BJ (cell line): ENCODE measurements at regions of chr7 and their contacts with region 1.

Region 1: DNA sequence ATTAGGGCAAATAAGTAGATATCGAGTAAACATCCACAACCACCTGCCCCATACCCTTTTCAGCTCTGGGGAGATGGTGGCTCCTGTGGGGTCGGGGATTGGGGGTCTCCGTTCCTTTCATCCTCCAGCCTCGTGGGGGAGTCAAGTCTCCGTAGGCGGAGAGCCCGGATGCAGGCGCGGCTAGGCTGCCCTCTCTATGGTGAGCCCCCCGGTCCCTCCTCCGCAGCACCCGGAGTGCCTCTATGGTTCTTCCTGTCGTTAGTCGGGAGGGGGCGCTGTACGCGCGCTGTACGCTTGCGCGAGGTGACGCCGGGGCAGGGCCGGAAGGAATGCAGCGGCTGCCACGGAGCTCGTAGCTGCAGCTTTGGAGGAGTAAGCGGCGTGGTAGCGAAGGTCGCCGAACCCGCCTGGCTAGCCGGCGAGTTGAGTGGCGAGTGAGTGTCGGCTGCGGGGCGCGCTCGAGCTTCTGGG is 14.8 kb upstream of the MMD2 start:
- DNase-seq: peak; percentile 46
- H3K4me3 ChIP-seq: peak overlapping the region; percentile 89
- H3K27me3 ChIP-seq: no peaks in the 10 kb centered on the region
- CTCF ChIP-seq: peak; percentile 92

Region 2: GRCh38 chr7:4957847-4958476 is 15.8 kb before region 1 on chr7:
- CTCF ChIA-PET with region 1: interaction called, 19 read pairs
- POLR2A ChIA-PET with region 1: no interaction called
- DNase-seq: no peak
- H3K4me3 ChIP-seq: no peak overlapping the region
- H3K27me3 ChIP-seq: peaks cover 7% of the 10 kb centered on the region
- CTCF ChIP-seq: no peak

Region 3: DNA sequence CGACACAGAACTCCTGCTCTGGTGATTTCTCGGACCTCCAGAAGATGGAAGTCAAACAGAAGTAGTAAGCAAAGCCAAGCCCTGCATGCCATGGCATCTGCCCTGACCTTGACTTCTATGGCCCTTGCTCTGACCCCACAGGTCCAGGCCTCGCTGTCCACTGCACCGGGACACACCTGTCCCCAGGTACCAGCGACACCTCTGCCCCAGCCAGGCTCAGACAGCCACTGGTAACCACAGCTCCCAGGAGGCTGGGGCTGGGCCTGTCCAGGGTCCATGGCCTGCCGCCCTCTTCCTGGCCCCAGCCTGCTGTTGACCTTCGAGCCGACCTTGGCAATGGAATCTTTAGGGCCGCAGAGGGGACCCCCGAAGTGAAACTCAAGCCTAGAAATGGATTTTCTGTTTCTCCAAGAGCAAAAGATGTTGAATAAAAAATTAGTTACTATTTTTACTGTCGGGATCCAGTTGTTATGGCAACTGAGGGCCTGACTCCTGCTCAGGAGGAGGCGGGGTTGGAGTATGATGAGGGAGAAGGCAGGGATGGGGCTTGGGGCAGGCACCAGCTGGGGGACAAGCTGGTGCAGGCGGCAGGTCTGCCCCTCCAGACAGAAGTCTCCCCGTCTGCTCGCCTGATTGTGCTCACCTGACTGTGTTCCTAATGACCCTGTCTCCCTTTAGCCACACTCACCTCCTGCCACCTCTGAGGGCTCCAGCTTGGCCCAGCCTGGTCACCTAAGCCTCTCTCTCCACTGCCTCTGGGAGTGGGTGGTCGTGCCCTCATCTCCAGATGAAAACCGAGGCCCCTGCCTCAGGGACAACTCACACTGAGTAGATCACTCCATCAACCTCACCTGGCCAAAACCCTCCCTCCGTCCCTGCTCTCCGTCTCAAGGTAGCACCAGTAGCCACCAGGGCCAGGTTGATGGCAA is 10.6 kb before region 1 on chr7:
- CTCF ChIA-PET with region 1: interaction called, 19 read pairs
- POLR2A ChIA-PET with region 1: no interaction called
- DNase-seq: no peak
- H3K4me3 ChIP-seq: no peak overlapping the region
- H3K27me3 ChIP-seq: peaks cover 4% of the 10 kb centered on the region
- CTCF ChIP-seq: no peak

Region 4: GRCh38 chr7:4998910-4999309 is 25.1 kb after region 1 on chr7:
- CTCF ChIA-PET with region 1: interaction called, 16 read pairs
- POLR2A ChIA-PET with region 1: no interaction called
- DNase-seq: no peak
- H3K4me3 ChIP-seq: no peak overlapping the region
- H3K27me3 ChIP-seq: no peaks in the 10 kb centered on the region
- CTCF ChIP-seq: no peak

Region 5: DNA sequence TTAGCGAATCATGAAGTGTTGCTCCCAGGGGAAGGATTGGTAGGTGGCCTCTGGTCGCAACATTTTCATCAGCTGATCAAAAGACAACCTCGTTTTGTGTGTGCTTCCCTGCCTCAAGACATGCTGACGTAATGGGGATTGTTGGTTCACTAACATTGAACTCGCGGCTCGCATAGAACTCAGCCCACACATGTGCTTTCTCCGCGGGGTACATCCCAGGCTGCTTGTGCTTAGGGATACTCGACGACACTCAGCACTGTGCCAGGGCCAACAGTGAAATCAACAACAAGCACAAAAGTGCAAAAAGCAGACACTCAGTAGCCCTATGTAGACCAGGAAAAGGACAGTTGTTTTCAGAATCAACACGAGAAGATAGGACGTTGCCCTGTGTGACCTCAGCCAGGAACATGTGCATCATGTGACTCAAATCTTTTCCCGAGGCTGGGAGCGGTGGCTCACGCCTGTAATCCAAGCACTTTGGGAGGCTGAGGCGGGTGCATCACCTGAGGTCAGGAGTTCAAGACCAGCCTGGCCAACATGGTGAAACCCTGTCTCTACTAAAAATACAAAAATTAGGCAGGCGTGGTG is 237.1 kb after region 1 on chr7:
- CTCF ChIA-PET with region 1: no interaction called
- POLR2A ChIA-PET with region 1: no interaction called
- DNase-seq: no peak
- H3K4me3 ChIP-seq: no peak overlapping the region
- H3K27me3 ChIP-seq: no peaks in the 10 kb centered on the region
- CTCF ChIP-seq: no peak